Lower leg skin (tissue), 4 donors: ENCODE measurements at regions of chr18 and their contacts with region 1.

Region 1: GRCh38 chr18:46660955-46661749 is 4.1 kb upstream of the LOXHD1 start:
- DNase-seq: no peak
- H3K4me3 ChIP-seq: no peak overlapping the region
- CTCF ChIP-seq: no peak
- POLR2A ChIP-seq: no peak

Region 2: DNA sequence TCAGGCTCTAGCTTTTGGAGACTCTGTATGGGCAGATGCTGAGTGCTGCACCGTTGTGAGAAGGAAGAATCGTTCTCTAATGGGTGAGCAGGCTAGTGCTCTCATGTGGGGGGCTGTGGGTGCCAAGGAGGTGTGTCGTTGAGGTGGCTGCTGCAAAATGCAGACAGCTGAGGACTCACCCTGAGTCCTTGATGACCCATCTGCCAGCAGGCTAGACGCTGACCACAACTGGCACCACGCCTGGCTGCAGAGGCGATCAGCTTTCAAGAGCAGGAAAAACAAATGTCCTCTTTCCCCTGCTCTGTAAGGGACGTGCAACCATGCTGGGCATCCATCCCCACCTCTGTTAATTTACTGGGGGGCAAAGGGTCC is 508.7 kb before region 1 on chr18:
- intact Hi-C with region 1: loop called (anchors 1 kb)
- DNase-seq: no peak
- H3K4me3 ChIP-seq: no peak overlapping the region
- CTCF ChIP-seq: no peak
- POLR2A ChIP-seq: no peak

Region 3: DNA sequence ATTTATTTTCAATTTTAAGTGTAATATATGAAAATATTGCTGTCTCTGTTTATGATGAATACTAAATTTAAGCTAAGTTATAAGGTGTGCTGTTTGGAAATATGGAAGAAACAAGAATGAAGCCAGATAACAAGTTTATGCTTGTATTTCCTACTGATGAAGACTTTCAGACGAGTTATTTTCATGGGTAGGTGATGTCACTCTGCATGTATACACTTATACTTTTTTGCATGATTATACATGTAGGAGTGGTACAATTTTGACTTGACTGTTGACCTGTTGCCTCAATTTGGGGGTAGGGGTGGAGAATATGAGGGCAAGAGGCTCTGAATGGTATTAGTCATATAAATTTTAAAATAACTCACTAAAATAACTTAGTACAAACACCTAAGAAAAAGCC is 423.3 kb before region 1 on chr18:
- intact Hi-C with region 1: no loop called
- DNase-seq: no peak
- H3K4me3 ChIP-seq: no peak overlapping the region
- CTCF ChIP-seq: no peak
- POLR2A ChIP-seq: no peak

Region 4: DNA sequence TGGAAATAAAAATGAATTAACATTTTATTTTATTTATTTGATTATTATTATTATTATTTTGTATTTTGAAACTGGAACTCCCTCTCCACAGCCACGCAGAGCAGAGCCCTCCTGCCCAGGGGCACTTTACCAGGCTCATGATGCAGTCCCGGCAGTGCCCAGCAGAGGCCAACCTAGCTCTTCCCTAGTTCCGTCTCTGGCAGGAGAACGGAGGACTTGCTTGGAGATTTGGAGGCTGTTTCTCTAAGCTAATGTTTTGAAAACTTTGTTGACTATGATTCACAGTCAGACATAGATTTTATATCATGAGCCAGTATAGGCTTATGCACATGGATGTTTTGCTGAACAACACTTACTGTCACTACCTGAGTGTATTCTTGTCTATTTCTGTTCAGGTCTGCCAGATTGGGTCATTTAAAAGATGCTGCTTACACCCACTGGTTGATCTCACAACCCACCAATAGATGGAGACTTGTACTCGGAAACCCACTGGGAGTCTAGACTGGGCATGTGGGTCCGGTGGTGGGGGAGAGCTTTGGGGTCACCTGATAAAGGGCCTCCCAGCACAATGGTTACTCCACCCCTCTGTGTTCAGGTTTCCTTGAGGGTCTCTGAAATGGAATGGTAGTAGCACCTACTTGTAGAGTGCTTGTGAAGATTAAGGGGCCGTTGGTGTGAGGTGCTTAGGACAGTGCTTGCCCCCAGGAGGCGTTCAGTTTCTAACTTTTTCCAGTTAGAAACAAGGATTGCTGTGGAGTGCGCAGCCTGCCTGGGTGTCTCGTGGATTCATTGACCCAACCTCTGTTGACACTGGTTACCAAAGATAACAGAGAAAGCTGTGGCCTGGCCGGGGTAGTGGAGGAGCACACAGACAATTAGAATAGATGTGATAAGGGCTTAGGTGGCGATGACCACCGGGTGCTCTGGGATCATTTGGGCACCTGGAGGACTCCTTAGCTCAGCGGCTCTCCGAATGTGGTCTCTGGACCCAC is 379.7 kb before region 1 on chr18:
- intact Hi-C with region 1: loop called (anchors 5 kb)
- DNase-seq: peak; percentile 37 to 87
- H3K4me3 ChIP-seq: no peak overlapping the region
- CTCF ChIP-seq: peak in 1 of 3 donors; percentile 24
- POLR2A ChIP-seq: no peak